CD4-positive, alpha-beta T cell (primary cell): ENCODE measurements at regions of chr12 and their contacts with region 1.

Region 1: GRCh38 chr12:131710464-131711457 is at the start of gene SFSWAP:
- DNase-seq: peak; percentile 52 to 86 (median 71)
- ATAC-seq: peak; percentile 81
- H3K4me3 ChIP-seq: peak within 1 kb of the TSS; percentile 95
- H3K4me3 Mint-ChIP-seq: peak within 1 kb of the TSS; percentile 99
- H3K27ac ChIP-seq: peak within 1 kb of the TSS; percentile 86 to 95
- H3K27ac Mint-ChIP-seq: peak within 1 kb of the TSS; percentile 92
- H3K4me1 ChIP-seq: peaks cover 28% of the 10 kb centered on the region
- H3K4me1 Mint-ChIP-seq: peaks cover 34% of the 10 kb centered on the region
- H3K27me3 ChIP-seq: no peaks in the 10 kb centered on the region
- H3K27me3 Mint-ChIP-seq: no peaks in the 10 kb centered on the region
- CTCF ChIP-seq: no peak
- total RNA-seq, gene SFSWAP: 88.7 to 98.4 TPM

Region 2: DNA sequence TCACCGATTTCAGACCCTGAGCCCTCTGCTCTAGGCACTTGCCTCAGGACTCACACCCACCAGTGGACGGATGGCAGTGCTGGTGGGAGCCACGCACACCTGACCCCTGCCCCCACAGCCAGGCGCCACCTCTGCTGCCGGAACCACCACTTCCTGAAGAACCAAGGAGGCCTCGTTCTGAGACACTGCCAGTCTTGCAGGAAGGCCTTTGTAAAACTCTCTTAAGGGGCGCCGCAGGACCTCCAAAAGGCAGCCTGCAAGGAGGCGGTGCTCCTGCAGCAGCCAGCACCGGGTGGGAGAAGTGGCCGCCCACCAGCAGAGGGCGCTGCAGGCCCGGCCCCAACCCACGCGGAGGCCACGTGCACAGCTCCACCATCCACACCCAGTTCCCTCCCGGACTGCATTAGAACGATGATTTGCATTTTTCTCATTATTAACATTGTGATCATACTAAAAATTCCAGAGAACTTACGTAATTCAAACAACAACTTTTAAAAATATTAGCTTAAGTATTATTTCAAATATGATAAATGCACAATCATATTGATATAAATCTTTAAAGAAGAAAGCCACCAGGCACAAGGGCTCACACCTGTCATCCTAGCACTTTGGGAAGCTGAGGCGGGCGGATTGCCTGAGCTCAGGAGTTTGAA is 884.5 kb before region 1 on chr12:
- CTCF ChIA-PET with region 1: no interaction called
- POLR2A ChIA-PET with region 1: no interaction called
- intact Hi-C with region 1: loop called in 1 of 2 experiments (anchors 10 kb)
- DNase-seq: peak; percentile 57 to 85 (median 68)
- ATAC-seq: peak; percentile 100
- H3K4me3 ChIP-seq: no peak overlapping the region
- H3K4me3 Mint-ChIP-seq: no peak overlapping the region
- H3K27ac ChIP-seq: no peak overlapping the region
- H3K27ac Mint-ChIP-seq: no peak overlapping the region
- H3K4me1 ChIP-seq: peaks cover 7% of the 10 kb centered on the region
- H3K4me1 Mint-ChIP-seq: peaks cover 11% of the 10 kb centered on the region
- H3K27me3 ChIP-seq: no peaks in the 10 kb centered on the region
- H3K27me3 Mint-ChIP-seq: no peaks in the 10 kb centered on the region
- CTCF ChIP-seq: peak; percentile 90

Region 3: DNA sequence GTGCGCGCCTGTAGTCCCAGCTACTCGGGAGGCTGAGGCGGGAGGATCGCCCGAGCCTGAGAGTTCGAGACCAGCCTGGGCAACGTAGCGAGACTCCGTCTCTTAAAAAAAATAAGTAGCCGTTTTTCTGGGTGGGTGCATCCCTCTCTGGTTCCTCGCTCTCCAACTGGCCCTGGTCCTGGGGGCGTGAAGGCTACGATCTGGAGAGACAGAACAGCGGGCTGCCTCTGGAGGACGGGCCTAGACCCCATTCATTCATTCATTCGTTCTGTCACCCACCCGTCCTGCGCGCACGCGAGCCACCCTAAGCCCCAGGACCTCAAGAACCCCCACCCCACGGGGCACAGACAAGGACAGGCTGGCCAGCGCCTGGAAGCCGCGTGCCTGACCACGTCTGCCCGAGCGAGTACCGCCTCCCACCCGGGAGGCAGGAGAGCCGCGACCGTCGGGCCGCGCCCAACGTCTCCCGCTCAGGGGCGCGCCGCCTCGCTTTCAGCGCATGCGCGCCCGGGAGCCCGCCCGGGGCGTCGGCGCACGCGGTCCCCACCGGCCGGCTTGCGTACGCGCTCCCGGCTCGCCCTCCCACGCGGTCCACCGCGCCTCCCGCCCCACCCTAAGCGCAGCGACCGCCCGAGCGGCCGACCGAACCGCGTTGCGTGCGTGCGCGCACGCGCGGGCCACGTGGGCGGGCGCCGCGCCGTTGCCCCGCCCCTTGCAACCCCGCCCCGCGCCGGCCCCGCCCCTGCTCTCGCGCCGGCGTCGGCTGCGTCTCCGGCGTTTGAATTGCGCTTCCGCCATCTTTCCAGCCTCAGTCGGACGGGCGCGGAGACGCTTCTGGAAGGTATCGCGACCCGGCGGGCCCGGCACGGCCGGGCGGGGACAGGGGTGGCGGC is 839.2 kb before region 1 on chr12 and contains the start of gene RAN:
- CTCF ChIA-PET with region 1: no interaction called
- POLR2A ChIA-PET with region 1: no interaction called
- intact Hi-C with region 1: loop called in 1 of 2 experiments (anchors 5 kb)
- DNase-seq: peak; percentile 79 to 98 (median 90)
- ATAC-seq: peak; percentile 68
- H3K4me3 ChIP-seq: peak within 1 kb of the TSS; percentile 84
- H3K4me3 Mint-ChIP-seq: peak within 1 kb of the TSS; percentile 93
- H3K27ac ChIP-seq: peak within 1 kb of the TSS; percentile 79 to 89
- H3K27ac Mint-ChIP-seq: peak within 1 kb of the TSS; percentile 95
- H3K4me1 ChIP-seq: peaks cover 56% of the 10 kb centered on the region
- H3K4me1 Mint-ChIP-seq: peaks cover 65% of the 10 kb centered on the region
- H3K27me3 ChIP-seq: no peaks in the 10 kb centered on the region
- H3K27me3 Mint-ChIP-seq: no peaks in the 10 kb centered on the region
- CTCF ChIP-seq: no peak
- total RNA-seq, gene RAN: 278 to 302 TPM

Region 4: DNA sequence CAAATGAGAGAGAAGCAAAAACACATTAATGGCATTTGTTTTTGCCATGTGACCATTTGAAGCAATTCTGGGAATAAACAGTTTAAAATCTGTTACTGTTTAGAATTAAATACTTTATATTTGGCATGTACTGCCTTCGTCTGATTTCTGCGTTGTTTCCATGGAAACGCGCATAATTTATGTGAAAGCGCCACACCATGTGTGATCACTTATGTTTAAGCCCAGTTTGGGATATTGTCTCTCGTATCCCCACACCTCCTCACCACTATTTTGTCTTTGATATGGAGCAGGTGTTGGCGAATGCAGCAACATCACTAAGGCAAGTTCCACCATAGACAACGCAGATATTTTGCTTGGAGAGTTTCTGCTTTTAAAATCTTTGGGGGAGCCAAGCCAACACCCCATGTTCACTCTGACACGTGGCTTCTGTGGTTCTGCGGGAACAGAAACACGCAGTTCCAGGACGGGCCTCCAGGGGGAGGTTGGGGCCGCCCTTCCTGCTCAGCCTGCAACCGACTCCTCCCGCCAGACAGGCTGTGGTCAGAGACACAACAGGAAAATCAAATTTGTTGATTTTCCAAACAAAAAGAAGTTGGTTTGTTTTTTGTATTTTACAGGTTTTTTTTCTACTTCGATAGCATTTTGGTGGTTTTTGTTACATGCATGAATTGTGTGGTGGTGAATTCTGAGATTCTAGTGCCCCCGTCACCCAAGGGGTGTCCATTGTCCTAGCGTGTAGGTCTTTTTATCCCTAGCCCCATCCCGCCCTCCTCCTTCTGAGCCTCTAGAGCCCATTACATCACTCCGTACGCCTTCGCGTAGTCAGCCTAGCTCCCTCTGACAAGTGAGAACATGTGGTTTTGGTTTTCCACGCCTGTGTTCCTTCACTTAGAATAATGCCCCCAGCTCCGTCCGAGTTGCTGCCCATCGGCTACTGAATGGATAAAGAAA is 101.7 kb before region 1 on chr12:
- CTCF ChIA-PET with region 1: no interaction called
- POLR2A ChIA-PET with region 1: interaction called, 9 read pairs
- intact Hi-C with region 1: loop called (anchors 2 to 10 kb)
- DNase-seq: peak in 13 of 14 experiments; percentile 34 to 79 (median 54)
- ATAC-seq: peak; percentile 70
- H3K4me3 ChIP-seq: no peak overlapping the region
- H3K4me3 Mint-ChIP-seq: peak overlapping the region; percentile 42
- H3K27ac ChIP-seq: no peak overlapping the region
- H3K27ac Mint-ChIP-seq: no peak overlapping the region
- H3K4me1 ChIP-seq: peaks cover 50% of the 10 kb centered on the region
- H3K4me1 Mint-ChIP-seq: peaks cover 51% of the 10 kb centered on the region
- H3K27me3 ChIP-seq: no peaks in the 10 kb centered on the region
- H3K27me3 Mint-ChIP-seq: no peaks in the 10 kb centered on the region
- CTCF ChIP-seq: peak; percentile 82

Region 5: DNA sequence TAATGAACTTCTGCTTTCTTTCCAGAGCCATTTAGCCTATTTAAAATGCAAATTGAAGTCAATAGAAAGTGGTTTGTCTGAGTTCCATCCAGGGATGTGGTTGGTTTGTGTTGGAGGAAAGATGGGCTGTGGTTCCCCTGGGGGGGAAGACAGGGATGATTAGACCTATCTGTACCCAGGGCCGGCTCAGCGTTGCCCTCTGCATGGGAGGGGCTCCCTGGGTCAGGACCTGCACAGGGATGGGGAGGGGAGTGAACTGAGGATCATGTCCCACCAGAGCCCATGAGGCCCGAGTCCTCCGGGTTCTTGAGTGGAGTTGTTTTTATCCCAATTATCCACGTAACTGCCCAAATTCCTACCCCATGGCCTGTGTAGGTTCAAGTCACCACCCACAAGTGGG is 76.7 kb before region 1 on chr12:
- CTCF ChIA-PET with region 1: no interaction called
- POLR2A ChIA-PET with region 1: no interaction called
- intact Hi-C with region 1: loop called in 1 of 2 experiments (anchors 5 kb)
- DNase-seq: no peak
- ATAC-seq: no peak
- H3K4me3 ChIP-seq: no peak overlapping the region
- H3K4me3 Mint-ChIP-seq: no peak overlapping the region
- H3K27ac ChIP-seq: no peak overlapping the region
- H3K27ac Mint-ChIP-seq: no peak overlapping the region
- H3K4me1 ChIP-seq: peaks cover 1% of the 10 kb centered on the region
- H3K4me1 Mint-ChIP-seq: no peaks in the 10 kb centered on the region
- H3K27me3 ChIP-seq: peaks cover 0 to 7% of the 10 kb centered on the region in 2 experiments
- H3K27me3 Mint-ChIP-seq: peaks cover 34% of the 10 kb centered on the region
- CTCF ChIP-seq: no peak

Region 6: GRCh38 chr12:131894313-131894860 is 183.6 kb after region 1 on chr12 and contains the start of gene ULK1:
- CTCF ChIA-PET with region 1: no interaction called
- POLR2A ChIA-PET with region 1: no interaction called
- intact Hi-C with region 1: loop called in 1 of 2 experiments (anchors 5 kb)
- DNase-seq: peak; percentile 83 to 96 (median 92)
- ATAC-seq: peak; percentile 82
- H3K4me3 ChIP-seq: peak within 1 kb of the TSS; percentile 71
- H3K4me3 Mint-ChIP-seq: peak within 1 kb of the TSS; percentile 93
- H3K27ac ChIP-seq: peak within 1 kb of the TSS in 1 of 2 donors; percentile 13
- H3K27ac Mint-ChIP-seq: peak within 1 kb of the TSS; percentile 88
- H3K4me1 ChIP-seq: peaks cover 31% of the 10 kb centered on the region
- H3K4me1 Mint-ChIP-seq: peaks cover 25% of the 10 kb centered on the region
- H3K27me3 ChIP-seq: no peaks in the 10 kb centered on the region
- H3K27me3 Mint-ChIP-seq: no peaks in the 10 kb centered on the region
- CTCF ChIP-seq: no peak
- total RNA-seq, gene ULK1: 85.0 to 91.6 TPM

Region 7: DNA sequence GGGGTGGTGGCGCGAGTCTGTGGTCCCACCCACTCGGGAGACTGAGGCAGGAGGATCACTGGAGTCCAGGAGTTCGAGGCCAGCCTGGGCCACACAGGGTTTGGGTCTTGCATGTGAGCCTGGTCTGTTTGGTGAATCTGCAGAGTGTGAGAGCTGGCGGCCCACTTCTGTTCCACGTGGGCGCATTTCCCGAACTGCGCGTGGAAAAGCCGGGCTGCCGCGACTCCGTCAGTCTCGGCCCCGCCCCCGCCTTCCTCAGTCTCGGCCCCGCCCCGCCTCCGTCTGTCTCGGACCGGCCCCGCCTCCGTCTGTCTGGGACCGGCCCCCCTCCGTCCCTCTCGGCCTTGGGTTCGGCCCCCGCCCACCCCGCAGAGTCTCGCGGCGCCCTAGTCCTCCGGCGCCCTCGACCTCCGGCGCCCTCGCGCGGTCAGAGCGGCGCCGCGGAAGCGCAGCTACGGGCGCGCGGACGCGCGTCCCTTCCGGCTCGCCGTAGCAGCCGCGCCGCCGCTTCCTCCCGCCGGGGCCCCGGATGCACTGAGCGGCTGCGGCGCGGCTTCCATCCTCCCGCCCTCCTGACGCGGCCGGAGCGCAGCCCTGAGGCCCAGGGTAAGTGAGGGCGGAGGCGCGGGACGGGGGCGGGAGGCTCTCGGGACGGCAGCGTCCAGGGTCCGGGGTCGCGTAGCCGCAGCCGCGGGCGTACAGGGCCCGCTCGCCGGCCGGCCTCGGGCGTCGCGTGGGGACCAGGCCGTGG is 238.8 kb after region 1 on chr12 and contains the start of gene EP400:
- CTCF ChIA-PET with region 1: no interaction called
- POLR2A ChIA-PET with region 1: interaction called, 3 read pairs
- intact Hi-C with region 1: loop called in 1 of 2 experiments (anchors 5 kb)
- DNase-seq: peak; percentile 83 to 98 (median 94)
- ATAC-seq: peak; percentile 85
- H3K4me3 ChIP-seq: peak within 1 kb of the TSS; percentile 93
- H3K4me3 Mint-ChIP-seq: peak within 1 kb of the TSS; percentile 93
- H3K27ac ChIP-seq: peak within 1 kb of the TSS; percentile 48 to 70
- H3K27ac Mint-ChIP-seq: peak within 1 kb of the TSS; percentile 90
- H3K4me1 ChIP-seq: peaks cover 47% of the 10 kb centered on the region
- H3K4me1 Mint-ChIP-seq: peaks cover 45% of the 10 kb centered on the region
- H3K27me3 ChIP-seq: no peaks in the 10 kb centered on the region
- H3K27me3 Mint-ChIP-seq: no peaks in the 10 kb centered on the region
- CTCF ChIP-seq: peak; percentile 22
- total RNA-seq, gene EP400: 56.4 to 56.5 TPM